ENCODE measurements at regions of chr10 and their contacts with region 1.

Region 1: GRCh38 chr10:10911471-10911921 is 106.2 kb upstream of the CELF2 start:
- DNase-seq: peak; percentile 82
- ATAC-seq: peak; percentile 79

Region 2: GRCh38 chr10:10804998-10805740 is 106.3 kb before region 1 on chr10:
- intact Hi-C with region 1: loop called (anchors 5 kb)
- DNase-seq: no peak
- ATAC-seq: no peak

Region 3: DNA sequence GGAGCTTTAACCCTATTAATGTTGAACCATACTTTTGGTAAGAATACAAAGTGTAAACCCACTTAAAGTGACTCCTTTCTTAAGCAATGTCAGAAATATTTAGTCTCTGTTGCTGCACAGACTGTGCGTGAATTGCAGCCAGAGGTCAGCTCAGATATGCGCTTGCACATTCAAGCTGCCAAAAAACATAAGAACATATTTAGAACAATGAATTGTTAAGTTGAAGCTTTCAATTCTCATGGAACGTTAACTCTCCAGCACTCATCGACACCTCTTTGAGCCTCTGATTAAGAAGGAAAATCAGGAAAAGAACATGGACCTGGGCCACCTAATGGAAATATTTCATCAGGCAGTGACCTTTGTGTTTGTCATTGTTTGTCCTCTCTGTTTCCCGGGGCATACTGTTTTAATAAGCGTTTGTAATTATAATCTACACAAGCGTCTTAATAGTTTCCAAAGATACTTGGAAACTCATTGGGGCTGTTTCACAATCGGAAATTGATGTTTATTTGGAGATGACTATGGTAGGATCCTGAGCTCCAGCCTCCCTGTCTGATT is 86.8 kb before region 1 on chr10:
- intact Hi-C with region 1: loop called (anchors 5 kb)
- DNase-seq: peak; percentile 76
- ATAC-seq: peak; percentile 86

Region 4: GRCh38 chr10:11024596-11024995 is 113.1 kb after region 1 on chr10:
- intact Hi-C with region 1: loop called (anchors 5 kb)
- DNase-seq: no peak
- ATAC-seq: peak; percentile 45

Measured in Right ventricle myocardium inferior (tissue), 1 donor.